B cell (primary cell): ENCODE measurements at regions of chr12 and their contacts with region 1.

Region 1: GRCh38 chr12:120469450-120470149 is at the start of gene SRSF9:
- DNase-seq: peak; percentile 99
- ATAC-seq: peak; percentile 87
- H3K4me3 ChIP-seq: peak within 1 kb of the TSS; percentile 62 to 81 (median 74)
- H3K4me3 Mint-ChIP-seq: peak within 1 kb of the TSS; percentile 91
- H3K27ac ChIP-seq: peak within 1 kb of the TSS; percentile 80 to 94
- H3K27ac Mint-ChIP-seq: peak within 1 kb of the TSS; percentile 89
- H3K4me1 ChIP-seq: peaks cover 20% of the 10 kb centered on the region in 2 donors
- H3K4me1 Mint-ChIP-seq: peaks cover 33% of the 10 kb centered on the region
- H3K27me3 ChIP-seq: no peaks in the 10 kb centered on the region
- H3K27me3 Mint-ChIP-seq: no peaks in the 10 kb centered on the region
- CTCF ChIP-seq: peak; percentile 95
- total RNA-seq, gene SRSF9: 151 and 157 TPM in 2 replicates

Region 2: GRCh38 chr12:120292661-120293531 is 176.7 kb before region 1 on chr12 and contains the start of gene RNU4-1:
- CTCF ChIA-PET with region 1: no interaction called
- POLR2A ChIA-PET with region 1: interaction called, 12 read pairs
- intact Hi-C with region 1: no loop called
- DNase-seq: peak; percentile 94
- ATAC-seq: peak; percentile 59
- H3K4me3 ChIP-seq: peak within 1 kb of the TSS; percentile 61 to 87 (median 82)
- H3K4me3 Mint-ChIP-seq: no peak within 1 kb of the TSS
- H3K27ac ChIP-seq: peak within 1 kb of the TSS; percentile 99
- H3K27ac Mint-ChIP-seq: no peak within 1 kb of the TSS
- H3K4me1 ChIP-seq: peaks cover 14 to 20% of the 10 kb centered on the region in 2 donors
- H3K4me1 Mint-ChIP-seq: peaks cover 13% of the 10 kb centered on the region
- H3K27me3 ChIP-seq: no peaks in the 10 kb centered on the region
- H3K27me3 Mint-ChIP-seq: no peaks in the 10 kb centered on the region
- CTCF ChIP-seq: no peak
- total RNA-seq, gene RNU4-1: 3,269 and 3,426 TPM in 2 replicates

Region 3: GRCh38 chr12:120356567-120357030 is 113.0 kb before region 1 on chr12:
- CTCF ChIA-PET with region 1: interaction called, 13 read pairs
- POLR2A ChIA-PET with region 1: interaction called, 3 read pairs
- intact Hi-C with region 1: loop called (anchors 1 kb)
- DNase-seq: peak; percentile 78
- ATAC-seq: peak; percentile 73
- H3K4me3 ChIP-seq: no peak overlapping the region
- H3K4me3 Mint-ChIP-seq: no peak overlapping the region
- H3K27ac ChIP-seq: no peak overlapping the region
- H3K27ac Mint-ChIP-seq: no peak overlapping the region
- H3K4me1 ChIP-seq: peaks cover 0 to 6% of the 10 kb centered on the region in 2 donors
- H3K4me1 Mint-ChIP-seq: peaks cover under 1% of the 10 kb centered on the region
- H3K27me3 ChIP-seq: peaks cover 0 to 20% (median 8%) of the 10 kb centered on the region in 4 experiments
- H3K27me3 Mint-ChIP-seq: peaks cover 52% of the 10 kb centered on the region
- CTCF ChIP-seq: peak; percentile 84

Region 4: DNA sequence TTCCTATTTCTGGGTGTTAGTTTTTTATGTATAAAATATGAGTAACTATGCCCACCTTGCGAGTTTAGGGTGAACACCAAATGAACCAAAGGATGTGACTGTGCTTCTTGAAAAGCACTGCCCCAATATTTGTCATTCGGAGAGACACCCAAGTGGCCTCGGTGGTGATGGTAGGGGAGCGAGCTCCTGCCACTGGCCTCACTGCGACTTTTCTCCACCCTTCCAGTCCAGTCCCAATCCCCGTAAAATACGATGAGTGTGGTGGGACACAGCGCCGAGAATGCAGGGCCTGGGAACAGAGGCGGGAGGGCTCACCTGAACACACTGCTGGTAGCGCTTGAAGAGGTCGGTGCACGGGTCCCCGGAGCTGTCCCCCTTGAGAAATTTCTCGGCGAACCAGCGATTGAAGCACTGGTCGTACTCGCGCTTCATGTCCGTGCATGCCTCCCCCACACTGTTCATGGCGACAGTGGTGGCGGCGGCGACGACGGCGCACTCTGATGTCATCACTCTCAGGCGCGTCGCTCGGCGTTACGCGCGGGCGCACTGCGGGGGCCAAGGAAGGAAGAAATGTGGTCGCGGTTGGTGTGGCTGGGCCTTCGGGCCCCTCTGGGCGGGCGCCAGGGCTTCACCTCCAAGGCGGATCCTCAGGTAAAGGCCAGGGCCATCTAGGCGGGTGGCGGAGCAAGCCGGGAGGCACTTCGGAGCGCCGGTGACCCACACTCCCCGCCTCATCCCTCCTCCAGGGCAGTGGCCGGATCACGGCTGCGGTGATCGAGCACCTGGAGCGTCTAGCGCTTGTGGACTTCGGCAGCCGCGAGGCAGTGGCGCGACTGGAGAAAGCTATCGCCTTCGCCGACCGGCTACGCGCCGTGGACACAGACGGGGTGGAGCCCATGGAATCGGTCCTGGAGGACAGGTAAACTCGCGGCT is 23.4 kb before region 1 on chr12 and contains the starts of genes GATC and TRIAP1:
- CTCF ChIA-PET with region 1: interaction called, 39 read pairs
- POLR2A ChIA-PET with region 1: interaction called, 5 read pairs
- intact Hi-C with region 1: loop called (anchors 1 kb)
- DNase-seq: peak; percentile 92
- ATAC-seq: peak; percentile 96
- H3K4me3 ChIP-seq: peak within 1 kb of the TSS; percentile 80 to 98 (median 90)
- H3K4me3 Mint-ChIP-seq: peak within 1 kb of the TSS; percentile 96
- H3K27ac ChIP-seq: peak within 1 kb of the TSS; percentile 90 to 94
- H3K27ac Mint-ChIP-seq: peak within 1 kb of the TSS; percentile 96
- H3K4me1 ChIP-seq: peaks cover 16 to 24% of the 10 kb centered on the region in 2 donors
- H3K4me1 Mint-ChIP-seq: peaks cover 38% of the 10 kb centered on the region
- H3K27me3 ChIP-seq: no peaks in the 10 kb centered on the region
- H3K27me3 Mint-ChIP-seq: no peaks in the 10 kb centered on the region
- CTCF ChIP-seq: no peak
- total RNA-seq, gene GATC: 26.0 and 26.4 TPM in 2 replicates
- total RNA-seq, gene TRIAP1: 15.8 and 19.6 TPM in 2 replicates

Region 5: GRCh38 chr12:120495723-120496412 is 26.3 kb after region 1 on chr12 and contains the start of gene DYNLL1:
- CTCF ChIA-PET with region 1: interaction called, 10 read pairs
- POLR2A ChIA-PET with region 1: interaction called, 26 read pairs
- intact Hi-C with region 1: loop called (anchors 1 kb)
- DNase-seq: peak; percentile 99
- ATAC-seq: peak; percentile 95
- H3K4me3 ChIP-seq: peak within 1 kb of the TSS; percentile 68 to 90 (median 83)
- H3K4me3 Mint-ChIP-seq: peak within 1 kb of the TSS; percentile 98
- H3K27ac ChIP-seq: peak within 1 kb of the TSS; percentile 45 to 78
- H3K27ac Mint-ChIP-seq: peak within 1 kb of the TSS; percentile 93
- H3K4me1 ChIP-seq: peaks cover 17% of the 10 kb centered on the region in 2 donors
- H3K4me1 Mint-ChIP-seq: peaks cover 28% of the 10 kb centered on the region
- H3K27me3 ChIP-seq: no peaks in the 10 kb centered on the region
- H3K27me3 Mint-ChIP-seq: no peaks in the 10 kb centered on the region
- CTCF ChIP-seq: no peak
- total RNA-seq, gene DYNLL1: 132 and 138 TPM in 2 replicates

Region 6: GRCh38 chr12:120904197-120904773 is 434.7 kb after region 1 on chr12 and contains the start of gene SPPL3:
- CTCF ChIA-PET with region 1: no interaction called
- POLR2A ChIA-PET with region 1: no interaction called
- intact Hi-C with region 1: loop called (anchors 10 kb)
- DNase-seq: peak; percentile 94
- ATAC-seq: peak; percentile 83
- H3K4me3 ChIP-seq: peak within 1 kb of the TSS; percentile 32 to 85 (median 75)
- H3K4me3 Mint-ChIP-seq: peak within 1 kb of the TSS; percentile 97
- H3K27ac ChIP-seq: peak within 1 kb of the TSS; percentile 54 to 80
- H3K27ac Mint-ChIP-seq: peak within 1 kb of the TSS; percentile 95
- H3K4me1 ChIP-seq: peaks cover 19 to 24% of the 10 kb centered on the region in 2 donors
- H3K4me1 Mint-ChIP-seq: peaks cover 29% of the 10 kb centered on the region
- H3K27me3 ChIP-seq: no peaks in the 10 kb centered on the region
- H3K27me3 Mint-ChIP-seq: no peaks in the 10 kb centered on the region
- CTCF ChIP-seq: no peak
- total RNA-seq, gene SPPL3: 43.6 and 53.7 TPM in 2 replicates